Activated CD8-positive, alpha-beta T cell treated with anti-CD3 and anti-CD28 coated beads for 36 hours (primary cell): ENCODE measurements at regions of chr12 and their contacts with region 1.

Region 1: GRCh38 chr12:57280211-57281062 is 29.4 kb upstream of the STAC3 start:
- DNase-seq: peak; percentile 93
- ATAC-seq: peak; percentile 98
- H3K4me3 Mint-ChIP-seq: peak overlapping the region; percentile 68
- H3K27ac Mint-ChIP-seq: peak overlapping the region; percentile 95
- H3K4me1 Mint-ChIP-seq: peaks cover 23% of the 10 kb centered on the region
- H3K27me3 Mint-ChIP-seq: no peaks in the 10 kb centered on the region
- CTCF ChIP-seq: no peak

Region 2: GRCh38 chr12:57261428-57261865 is 19.0 kb before region 1 on chr12:
- CTCF ChIA-PET with region 1: interaction called, 16 read pairs
- POLR2A ChIA-PET with region 1: interaction called, 3 read pairs
- intact Hi-C with region 1: no loop called
- DNase-seq: no peak
- ATAC-seq: no peak
- H3K4me3 Mint-ChIP-seq: no peak overlapping the region
- H3K27ac Mint-ChIP-seq: no peak overlapping the region
- H3K4me1 Mint-ChIP-seq: peaks cover 4% of the 10 kb centered on the region
- H3K27me3 Mint-ChIP-seq: no peaks in the 10 kb centered on the region
- CTCF ChIP-seq: no peak

Region 3: DNA sequence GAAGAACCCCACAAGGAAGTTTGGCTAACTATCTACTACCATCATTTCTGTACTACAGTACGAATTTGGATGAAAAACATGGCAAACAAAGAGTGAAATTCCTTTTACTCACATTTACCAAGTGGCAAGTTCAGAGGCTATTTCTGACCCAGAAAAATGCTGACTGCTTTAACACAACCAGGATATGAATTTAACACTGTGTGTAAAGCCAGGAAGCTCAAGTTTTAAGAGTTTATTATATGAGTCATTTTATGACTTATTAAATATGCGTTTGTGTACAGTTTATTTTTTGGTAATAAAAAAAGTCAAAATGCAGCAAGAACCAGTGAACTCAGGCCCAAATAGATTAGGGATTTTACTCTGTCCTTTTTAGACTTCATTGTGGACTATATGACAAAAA is 29.0 kb after region 1 on chr12:
- CTCF ChIA-PET with region 1: interaction called, 12 read pairs
- POLR2A ChIA-PET with region 1: no interaction called
- intact Hi-C with region 1: no loop called
- DNase-seq: no peak
- ATAC-seq: no peak
- H3K4me3 Mint-ChIP-seq: no peak overlapping the region
- H3K27ac Mint-ChIP-seq: no peak overlapping the region
- H3K4me1 Mint-ChIP-seq: no peaks in the 10 kb centered on the region
- H3K27me3 Mint-ChIP-seq: no peaks in the 10 kb centered on the region
- CTCF ChIP-seq: no peak

Region 4: DNA sequence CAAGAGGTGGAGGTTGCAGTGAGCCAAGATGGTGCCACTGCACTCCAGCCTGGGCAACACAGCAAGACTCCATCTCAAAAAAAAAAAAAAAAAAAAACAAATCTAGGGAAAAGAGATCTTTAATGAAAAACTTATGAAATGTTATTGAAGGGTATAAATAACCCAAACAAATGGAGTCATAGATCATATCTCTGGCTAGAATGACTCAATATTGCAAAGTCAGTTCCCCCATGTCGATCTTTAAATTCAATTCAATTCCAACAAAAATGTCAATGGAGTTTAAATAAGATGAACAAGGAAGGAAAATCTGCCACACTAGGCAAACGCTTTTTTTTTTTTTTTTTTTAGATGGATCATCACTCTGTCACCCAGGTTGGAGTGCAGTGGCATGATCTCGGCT is 71.7 kb after region 1 on chr12:
- CTCF ChIA-PET with region 1: no interaction called
- POLR2A ChIA-PET with region 1: no interaction called
- intact Hi-C with region 1: no loop called
- DNase-seq: no peak
- ATAC-seq: no peak
- H3K4me3 Mint-ChIP-seq: no peak overlapping the region
- H3K27ac Mint-ChIP-seq: no peak overlapping the region
- H3K4me1 Mint-ChIP-seq: peaks cover 4% of the 10 kb centered on the region
- H3K27me3 Mint-ChIP-seq: no peaks in the 10 kb centered on the region
- CTCF ChIP-seq: no peak